Spleen (tissue), 13 donors: ENCODE measurements at regions of chr2 and their contacts with region 1.

Region 1: GRCh38 chr2:134457765-134458472 is 204.0 kb downstream of the MGAT5 start:
- DNase-seq: no peak
- H3K4me3 ChIP-seq: no peak overlapping the region
- H3K27ac ChIP-seq: no peak overlapping the region
- H3K4me1 ChIP-seq: peaks cover 0 to 10% (median 0%) of the 10 kb centered on the region in 6 donors
- H3K27me3 ChIP-seq: no peaks in the 10 kb centered on the region
- CTCF ChIP-seq: no peak
- POLR2A ChIP-seq: no peak

Region 2: DNA sequence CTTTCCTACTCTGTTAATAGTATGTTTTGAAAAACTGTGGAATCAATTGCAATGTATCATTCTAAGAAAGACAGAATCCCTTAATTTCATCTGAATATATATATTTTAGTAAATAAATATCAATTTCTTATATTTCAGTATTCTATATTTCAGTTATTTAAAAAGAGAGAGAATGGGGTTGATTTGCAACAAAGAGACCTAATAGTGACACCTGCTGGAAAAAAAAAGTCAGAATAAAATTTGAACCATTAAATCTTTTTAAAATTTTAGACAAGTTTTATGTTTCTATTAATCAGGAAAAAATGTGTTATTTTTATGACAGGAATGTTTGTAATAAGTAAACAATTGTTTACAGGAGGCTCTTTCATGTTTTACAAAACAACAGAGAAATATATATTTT is 440.0 kb after region 1 on chr2:
- intact Hi-C with region 1: loop called (anchors 5 kb)
- DNase-seq: no peak
- H3K4me3 ChIP-seq: no peak overlapping the region
- H3K27ac ChIP-seq: no peak overlapping the region
- H3K4me1 ChIP-seq: no peaks in the 10 kb centered on the region
- H3K27me3 ChIP-seq: no peaks in the 10 kb centered on the region
- CTCF ChIP-seq: peak in 4 of 11 experiments; percentile 8 to 41 (median 23)
- POLR2A ChIP-seq: no peak